Breast epithelium (tissue), 4 donors: ENCODE measurements at regions of chr6 and their contacts with region 1.

Region 1: DNA sequence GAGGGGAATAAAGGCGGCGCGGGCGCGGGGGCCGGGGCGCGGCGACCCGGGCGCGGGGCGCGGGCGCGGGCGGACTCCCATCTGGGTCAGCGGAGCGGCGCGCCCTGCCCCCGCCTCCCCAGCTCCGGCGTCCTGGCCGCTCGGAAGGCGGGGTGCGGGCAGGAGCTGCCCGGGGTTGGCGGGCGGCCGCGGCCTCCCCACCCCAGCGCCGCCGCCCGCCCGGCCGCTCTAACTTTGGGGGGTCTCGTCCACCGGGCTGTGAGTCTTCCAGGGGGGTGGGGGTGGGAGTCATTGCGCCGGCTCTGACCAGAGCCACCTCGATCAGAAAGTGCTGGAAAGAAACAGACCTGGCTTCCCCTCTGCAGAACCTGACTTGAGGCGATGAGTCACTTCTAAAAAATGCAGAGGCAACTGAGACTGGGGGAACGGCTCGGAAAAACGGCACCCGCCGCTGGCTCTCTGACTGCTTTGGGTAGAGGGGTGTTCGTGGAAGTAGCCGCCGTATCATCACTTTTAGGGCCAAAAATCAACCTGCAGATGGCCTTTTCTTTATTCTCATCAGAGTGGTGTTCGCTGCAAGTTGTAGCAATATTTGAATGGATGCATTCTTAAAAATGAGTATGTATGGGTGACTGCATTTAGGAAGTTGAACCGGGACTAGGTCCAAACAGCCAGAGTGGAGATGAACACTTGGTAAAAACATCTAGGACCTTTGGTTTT is 657 bp downstream of the CAP2 start:
- DNase-seq: peak in 1 of 2 donors; percentile 48
- H3K4me3 ChIP-seq: peak overlapping the region; percentile 58 to 90 (median 81)
- H3K27ac ChIP-seq: peak overlapping the region; percentile 78 to 90
- H3K4me1 ChIP-seq: no peaks in the 10 kb centered on the region
- H3K27me3 ChIP-seq: no peaks in the 10 kb centered on the region
- CTCF ChIP-seq: no peak
- POLR2A ChIP-seq: no peak

Region 2: GRCh38 chr6:17381424-17382147 is 12.5 kb before region 1 on chr6:
- intact Hi-C with region 1: no loop called
- DNase-seq: no peak
- H3K4me3 ChIP-seq: no peak overlapping the region
- H3K27ac ChIP-seq: no peak overlapping the region
- H3K4me1 ChIP-seq: no peaks in the 10 kb centered on the region
- H3K27me3 ChIP-seq: no peaks in the 10 kb centered on the region
- CTCF ChIP-seq: no peak
- POLR2A ChIP-seq: no peak

Region 3: GRCh38 chr6:17423026-17423425 is 29.0 kb after region 1 on chr6:
- intact Hi-C with region 1: loop called (anchors 1 kb)
- DNase-seq: no peak
- H3K4me3 ChIP-seq: no peak overlapping the region
- H3K27ac ChIP-seq: no peak overlapping the region
- H3K4me1 ChIP-seq: no peaks in the 10 kb centered on the region
- H3K27me3 ChIP-seq: no peaks in the 10 kb centered on the region
- CTCF ChIP-seq: no peak
- POLR2A ChIP-seq: no peak

Region 4: GRCh38 chr6:18536663-18537062 is 1142.6 kb after region 1 on chr6:
- intact Hi-C with region 1: no loop called
- DNase-seq: no peak
- H3K4me3 ChIP-seq: no peak overlapping the region
- H3K27ac ChIP-seq: no peak overlapping the region
- H3K4me1 ChIP-seq: no peaks in the 10 kb centered on the region
- H3K27me3 ChIP-seq: no peaks in the 10 kb centered on the region
- CTCF ChIP-seq: no peak
- POLR2A ChIP-seq: no peak